ENCODE measurements at regions of chr1 and their contacts with region 1.

Region 1: GRCh38 chr1:155172732-155173477 is at the start of gene KRTCAP2:
- DNase-seq: peak; percentile 97
- ATAC-seq: peak; percentile 55 to 85
- H3K4me3 ChIP-seq: peak within 1 kb of the TSS; percentile 80
- H3K27ac ChIP-seq: peak within 1 kb of the TSS; percentile 93 to 99
- H3K4me1 ChIP-seq: peaks cover 21% of the 10 kb centered on the region
- CTCF ChIP-seq: peak; percentile 90
- EP300 ChIP-seq: no peak
- POLR2A ChIP-seq: peak; percentile 71
- RAD21 ChIP-seq: peak in 1 of 2 experiments; percentile 10; a peak in 1 of 5 replicates
- polyA plus RNA-seq, gene KRTCAP2: 154 and 227 TPM in 2 replicates

Region 2: DNA sequence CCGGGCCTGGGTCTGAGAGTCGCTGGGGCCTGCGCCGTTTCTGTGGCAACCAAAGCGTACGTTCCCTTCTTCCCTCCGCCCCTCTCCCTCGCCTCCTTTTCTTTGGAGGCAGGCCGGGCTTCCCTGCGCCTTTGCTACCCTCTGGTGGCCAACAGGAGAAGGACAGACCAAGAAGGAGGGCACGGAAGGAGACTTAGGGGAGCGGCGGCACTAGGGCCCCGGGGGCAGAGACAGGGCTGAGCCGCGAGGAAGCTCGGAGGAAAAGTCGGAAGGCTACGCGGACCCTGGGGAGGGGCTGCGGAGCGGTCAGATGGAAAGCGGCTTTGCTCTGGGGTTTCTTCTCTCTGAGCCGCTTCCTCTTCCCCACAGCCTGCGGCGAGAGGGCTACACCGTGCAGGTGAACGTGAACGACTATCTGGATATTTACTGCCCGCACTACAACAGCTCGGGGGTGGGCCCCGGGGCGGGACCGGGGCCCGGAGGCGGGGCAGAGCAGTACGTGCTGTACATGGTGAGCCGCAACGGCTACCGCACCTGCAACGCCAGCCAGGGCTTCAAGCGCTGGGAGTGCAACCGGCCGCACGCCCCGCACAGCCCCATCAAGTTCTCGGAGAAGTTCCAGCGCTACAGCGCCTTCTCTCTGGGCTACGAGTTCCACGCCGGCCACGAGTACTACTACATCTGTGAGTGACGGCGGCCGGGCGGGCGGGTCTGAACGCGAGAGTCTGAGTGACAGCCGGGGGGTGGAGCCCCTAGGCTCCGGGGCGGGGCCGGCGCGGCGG is 88.0 kb before region 1 on chr1:
- CTCF ChIA-PET with region 1: interaction called, 384 read pairs
- POLR2A ChIA-PET with region 1: interaction called, 6 read pairs
- DNase-seq: peak; percentile 95
- ATAC-seq: peak; percentile 77 to 85
- H3K4me3 ChIP-seq: peak overlapping the region; percentile 59
- H3K27ac ChIP-seq: peak overlapping the region; percentile 74 to 88
- H3K4me1 ChIP-seq: peaks cover 47% of the 10 kb centered on the region
- CTCF ChIP-seq: peak; percentile 82
- EP300 ChIP-seq: no peak
- POLR2A ChIP-seq: peak; percentile 11; the same call in 1 of the 2 replicates
- RAD21 ChIP-seq: peak; percentile 95 to 98

Region 3: DNA sequence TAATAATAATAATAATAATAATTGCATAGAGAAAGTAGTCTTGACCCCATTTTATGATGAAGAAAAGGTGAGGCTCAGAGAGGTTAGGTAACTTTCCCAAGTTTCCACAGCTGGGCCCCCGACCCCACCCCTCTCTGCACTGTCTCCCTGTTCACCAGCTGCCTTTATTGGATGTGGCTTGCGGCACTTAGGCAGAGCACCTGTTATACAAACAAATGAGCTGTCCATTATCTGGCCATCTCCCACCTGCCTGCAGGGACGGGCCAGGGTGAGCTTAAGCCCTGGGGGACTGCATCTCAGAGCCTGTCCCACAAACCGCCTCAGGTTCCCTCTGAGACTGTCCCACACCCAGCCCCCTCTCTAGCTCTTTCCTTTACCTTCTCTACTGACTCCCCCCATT is 55.3 kb before region 1 on chr1:
- CTCF ChIA-PET with region 1: interaction called, 202 read pairs
- POLR2A ChIA-PET with region 1: no interaction called
- DNase-seq: no peak
- ATAC-seq: no peak
- H3K4me3 ChIP-seq: no peak overlapping the region
- H3K27ac ChIP-seq: no peak overlapping the region
- H3K4me1 ChIP-seq: no peaks in the 10 kb centered on the region
- CTCF ChIP-seq: no peak
- EP300 ChIP-seq: no peak
- POLR2A ChIP-seq: no peak
- RAD21 ChIP-seq: no peak

Region 4: GRCh38 chr1:155135415-155136028 is 37.4 kb before region 1 on chr1 and contains the start of gene SLC50A1:
- CTCF ChIA-PET with region 1: interaction called, 202 read pairs
- POLR2A ChIA-PET with region 1: interaction called, 4 read pairs
- DNase-seq: peak; percentile 91 to 93
- ATAC-seq: peak; percentile 76 to 88
- H3K4me3 ChIP-seq: peak within 1 kb of the TSS; percentile 60
- H3K27ac ChIP-seq: peak within 1 kb of the TSS; percentile 90 to 92
- H3K4me1 ChIP-seq: peaks cover 34% of the 10 kb centered on the region
- CTCF ChIP-seq: no peak
- EP300 ChIP-seq: no peak
- POLR2A ChIP-seq: peak; percentile 77
- RAD21 ChIP-seq: no peak
- polyA plus RNA-seq, gene SLC50A1: 39.3 and 39.4 TPM in 2 replicates

Region 5: DNA sequence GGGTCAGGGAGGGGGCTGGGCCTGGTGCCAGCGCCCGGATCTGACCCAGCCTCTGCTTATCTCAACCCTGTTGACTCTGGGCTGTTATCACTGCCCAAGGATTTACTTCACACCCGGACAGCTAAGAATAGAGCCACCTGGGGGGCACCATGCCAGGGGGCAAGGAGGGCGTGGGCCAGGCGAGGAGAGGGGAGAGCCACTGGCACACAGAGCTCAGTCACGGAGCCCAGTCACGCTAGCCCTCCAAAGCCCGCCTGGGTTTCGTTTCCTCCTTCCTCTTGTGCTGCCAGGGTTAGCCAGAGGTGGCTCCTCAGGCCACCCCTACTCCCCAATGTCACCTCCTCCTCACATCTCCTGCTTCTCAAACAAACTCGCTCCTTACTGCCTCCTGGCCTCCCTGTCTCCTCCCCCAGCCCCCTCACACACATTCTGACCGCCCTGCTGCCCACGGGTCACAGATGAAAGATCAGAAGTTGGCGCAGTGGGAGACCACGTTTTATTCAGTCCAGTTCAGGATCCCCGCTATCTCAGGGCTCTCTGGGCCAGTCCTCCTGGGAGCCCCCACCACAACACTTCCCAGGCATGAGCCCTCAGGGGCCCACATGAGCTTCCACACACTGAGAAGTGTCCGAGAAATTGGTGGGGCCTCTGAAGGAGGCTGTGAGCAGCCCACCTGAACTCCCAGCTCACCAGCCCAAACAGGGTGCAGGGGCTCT is 12.6 kb after region 1 on chr1:
- CTCF ChIA-PET with region 1: interaction called, 51 read pairs
- POLR2A ChIA-PET with region 1: no interaction called
- DNase-seq: no peak
- ATAC-seq: peak in 1 of 2 experiments; percentile 35; a peak in 3 of 6 replicates
- H3K4me3 ChIP-seq: no peak overlapping the region
- H3K27ac ChIP-seq: peak overlapping the region in 1 of 2 experiments; percentile 31; a peak in 1 of 6 replicates
- H3K4me1 ChIP-seq: 0 out of 3 replicates have a peak, but pooled peaks cover 4% of the 10 kb centered on the region
- CTCF ChIP-seq: no peak
- EP300 ChIP-seq: no peak
- POLR2A ChIP-seq: no peak
- RAD21 ChIP-seq: no peak

Region 6: GRCh38 chr1:155208541-155209311 is 35.8 kb after region 1 on chr1 and contains the start of gene MTX1:
- CTCF ChIA-PET with region 1: interaction called, 12 read pairs
- POLR2A ChIA-PET with region 1: interaction called, 4 read pairs
- DNase-seq: peak; percentile 76 to 84
- ATAC-seq: peak; percentile 75 to 87
- H3K4me3 ChIP-seq: peak within 1 kb of the TSS; percentile 90
- H3K27ac ChIP-seq: peak within 1 kb of the TSS; percentile 97 to 99
- H3K4me1 ChIP-seq: peaks cover 23% of the 10 kb centered on the region
- CTCF ChIP-seq: no peak
- EP300 ChIP-seq: no peak; a peak in 1 of 5 replicates
- POLR2A ChIP-seq: peak; percentile 52
- RAD21 ChIP-seq: no peak
- polyA plus RNA-seq, gene MTX1: 53.4 and 73.9 TPM in 2 replicates